HEK293T (cell line): ENCODE measurements at regions of chr1 and their contacts with region 1.

Region 1: GRCh38 chr1:156728597-156729462 is at the start of gene ISG20L2:
- DNase-seq: peak; percentile 94

Region 2: GRCh38 chr1:156677616-156678596 is 50.9 kb before region 1 on chr1:
- CTCF ChIA-PET with region 1: interaction called, 28 read pairs
- POLR2A ChIA-PET with region 1: interaction called, 14 read pairs
- DNase-seq: peak; percentile 80

Region 3: GRCh38 chr1:156705918-156706656 is 22.7 kb before region 1 on chr1:
- CTCF ChIA-PET with region 1: interaction called, 67 read pairs
- POLR2A ChIA-PET with region 1: interaction called, 72 read pairs
- DNase-seq: peak; percentile 87

Region 4: GRCh38 chr1:156746728-156747631 is 18.1 kb after region 1 on chr1:
- CTCF ChIA-PET with region 1: interaction called, 18 read pairs
- POLR2A ChIA-PET with region 1: interaction called, 33 read pairs
- DNase-seq: peak; percentile 72

Region 5: GRCh38 chr1:156797212-156797871 is 68.5 kb after region 1 on chr1:
- CTCF ChIA-PET with region 1: interaction called, 11 read pairs
- POLR2A ChIA-PET with region 1: interaction called, 3 read pairs
- DNase-seq: peak; percentile 68

Region 6: GRCh38 chr1:156892190-156893047 is 163.6 kb after region 1 on chr1:
- CTCF ChIA-PET with region 1: interaction called, 33 read pairs
- POLR2A ChIA-PET with region 1: interaction called, 7 read pairs
- DNase-seq: peak; percentile 96